ENCODE measurements at regions of chr9 and their contacts with region 1.

Region 1: GRCh38 chr9:100011062-100011681 is 87.6 kb downstream of the ERP44 start:
- DNase-seq: no peak
- H3K4me3 ChIP-seq: no peak overlapping the region
- H3K27ac ChIP-seq: no peak overlapping the region
- H3K4me1 ChIP-seq: no peaks in the 10 kb centered on the region
- H3K27me3 ChIP-seq: no peaks in the 10 kb centered on the region
- CTCF ChIP-seq: peak; percentile 27 to 72 (median 63)
- POLR2A ChIP-seq: no peak

Region 2: DNA sequence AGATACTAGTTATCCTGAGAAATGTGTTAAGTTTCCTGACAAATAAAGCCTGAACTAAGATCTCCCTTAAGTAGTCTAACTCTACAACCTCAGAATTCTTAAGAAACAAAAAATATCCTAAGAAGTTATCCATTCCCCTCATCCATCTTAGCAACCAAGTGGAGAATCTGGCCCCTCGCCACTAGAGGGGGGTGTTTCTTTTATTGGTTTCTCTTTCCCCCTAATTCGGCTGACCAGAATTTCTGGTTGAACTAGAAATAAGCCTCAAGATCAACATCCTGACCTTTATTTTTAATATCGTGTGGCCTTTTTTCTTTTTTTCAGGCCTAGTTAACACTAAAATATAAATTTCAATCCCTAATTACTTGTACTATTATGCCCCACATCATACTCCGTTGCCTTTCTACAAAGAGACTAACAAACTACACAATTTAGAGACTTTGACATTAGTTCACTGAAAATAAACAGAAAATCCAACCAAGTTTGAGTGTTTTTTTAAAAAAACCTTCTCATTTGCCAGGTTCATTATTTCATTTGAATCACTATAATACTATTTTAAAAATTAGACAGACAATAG is 203.8 kb before region 1 on chr9:
- intact Hi-C with region 1: loop called (anchors 5 kb)
- DNase-seq: peak; percentile 81
- H3K4me3 ChIP-seq: no peak overlapping the region
- H3K27ac ChIP-seq: no peak overlapping the region
- H3K4me1 ChIP-seq: peaks cover 0 to 10% (median 4%) of the 10 kb centered on the region in 6 donors
- H3K27me3 ChIP-seq: no peaks in the 10 kb centered on the region
- CTCF ChIP-seq: peak; percentile 34 to 90 (median 79)
- POLR2A ChIP-seq: no peak

Region 3: DNA sequence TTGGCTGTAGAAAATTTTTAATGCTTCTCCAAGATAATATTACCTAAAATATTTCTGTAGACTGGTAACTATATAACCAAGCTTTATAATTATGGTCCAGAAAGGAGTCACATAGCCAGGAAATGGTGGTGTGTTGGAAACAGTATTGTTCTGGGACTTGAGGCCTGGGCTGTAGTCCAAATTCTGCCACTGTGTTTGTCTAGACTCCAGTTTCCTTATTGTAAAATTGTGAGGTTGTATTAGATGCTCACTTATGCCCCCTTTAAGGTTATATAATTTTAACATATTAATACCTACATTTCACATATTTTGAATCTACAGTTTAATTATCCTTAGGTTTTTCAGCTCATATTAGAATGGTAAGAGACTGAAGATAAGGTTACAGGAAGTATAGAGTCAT is 62.3 kb before region 1 on chr9:
- intact Hi-C with region 1: no loop called
- DNase-seq: no peak
- H3K4me3 ChIP-seq: no peak overlapping the region
- H3K27ac ChIP-seq: no peak overlapping the region
- H3K4me1 ChIP-seq: peaks cover 0 to 7% (median 0%) of the 10 kb centered on the region in 6 donors
- H3K27me3 ChIP-seq: no peaks in the 10 kb centered on the region
- CTCF ChIP-seq: no peak
- POLR2A ChIP-seq: no peak